ENCODE measurements at regions of chr17 and their contacts with region 1.

Region 1: DNA sequence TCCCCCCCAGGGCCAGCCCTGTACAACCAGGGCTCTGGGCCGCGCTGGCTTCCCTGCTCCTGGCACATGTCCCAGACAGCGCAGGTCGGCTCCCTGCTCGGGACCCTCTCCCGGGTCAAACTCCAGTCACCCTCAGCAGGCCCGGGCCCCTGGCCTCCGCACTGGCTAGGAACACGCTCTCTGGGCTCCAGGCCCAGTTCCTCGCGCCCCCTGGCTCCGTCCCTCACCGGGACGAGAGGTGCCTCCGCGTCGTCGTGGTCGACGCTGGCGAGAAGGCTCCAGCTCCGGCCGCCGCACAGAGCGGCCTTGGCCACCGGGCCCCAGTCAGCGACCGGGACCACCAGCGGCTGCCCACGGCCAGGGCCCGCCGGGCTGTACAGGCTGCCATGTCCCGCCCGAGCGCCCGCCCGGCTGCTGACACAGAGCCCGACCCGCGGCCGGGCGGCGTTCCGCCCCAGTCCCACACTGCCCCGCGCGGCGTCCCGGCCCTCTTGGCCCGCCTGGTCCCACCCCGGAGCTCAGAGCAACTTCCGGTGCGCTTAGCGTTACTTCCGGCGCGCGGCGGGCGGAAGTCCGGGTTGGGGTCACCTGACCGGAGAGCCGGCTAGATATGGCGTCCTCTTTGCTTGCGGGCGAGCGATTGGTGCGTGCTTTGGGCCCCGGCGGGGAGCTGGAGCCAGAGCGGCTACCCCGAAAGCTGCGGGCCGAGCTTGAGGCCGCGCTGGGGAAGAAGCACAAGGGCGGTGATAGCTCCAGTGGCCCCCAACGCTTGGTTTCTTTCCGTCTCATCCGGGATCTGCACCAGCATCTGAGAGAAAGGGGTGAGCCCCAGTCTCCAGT is at the start of gene POLDIP2:
- DNase-seq: peak; percentile 98
- CTCF ChIP-seq: no peak

Region 2: DNA sequence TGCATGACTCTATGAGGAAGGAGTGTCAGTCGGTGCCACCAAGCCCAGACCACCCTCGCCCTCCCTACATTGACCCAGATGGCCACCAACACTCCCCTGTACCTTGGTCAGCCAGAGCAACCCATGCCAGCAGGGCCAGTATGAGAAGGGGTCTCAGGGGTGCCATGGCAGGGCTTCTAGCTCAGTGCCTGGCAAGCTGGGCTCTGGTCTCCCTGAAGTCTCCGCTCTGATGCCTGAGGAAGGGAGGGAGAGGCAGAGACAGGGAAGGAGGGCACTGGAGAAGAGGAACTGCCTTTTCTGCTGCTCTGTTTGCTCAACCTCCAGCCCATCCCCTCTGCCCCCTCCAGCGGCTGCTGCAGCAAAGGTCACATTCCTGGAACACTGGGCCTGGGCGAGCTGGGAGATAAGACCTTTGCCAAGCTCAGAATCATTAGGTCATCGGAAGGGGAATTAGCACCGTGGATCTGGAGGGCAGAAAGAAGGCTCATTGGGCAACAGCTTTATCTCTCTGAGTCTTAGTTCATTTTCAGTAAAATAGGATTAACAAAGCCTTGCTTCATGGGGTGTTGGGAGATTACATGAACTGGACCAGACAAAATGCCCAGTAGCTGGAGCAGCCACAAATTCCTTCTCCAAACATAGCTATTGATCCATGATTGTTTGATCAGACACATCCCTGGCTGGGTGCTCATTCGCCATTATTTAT is 12.9 kb after region 1 on chr17 and contains the start of gene VTN:
- CTCF ChIA-PET with region 1: interaction called, 20 read pairs
- POLR2A ChIA-PET with region 1: interaction called, 10 read pairs
- DNase-seq: no peak
- CTCF ChIP-seq: no peak

Measured in GM10248 (cell line).